ENCODE measurements at regions of chr7 and their contacts with region 1.

Region 1: DNA sequence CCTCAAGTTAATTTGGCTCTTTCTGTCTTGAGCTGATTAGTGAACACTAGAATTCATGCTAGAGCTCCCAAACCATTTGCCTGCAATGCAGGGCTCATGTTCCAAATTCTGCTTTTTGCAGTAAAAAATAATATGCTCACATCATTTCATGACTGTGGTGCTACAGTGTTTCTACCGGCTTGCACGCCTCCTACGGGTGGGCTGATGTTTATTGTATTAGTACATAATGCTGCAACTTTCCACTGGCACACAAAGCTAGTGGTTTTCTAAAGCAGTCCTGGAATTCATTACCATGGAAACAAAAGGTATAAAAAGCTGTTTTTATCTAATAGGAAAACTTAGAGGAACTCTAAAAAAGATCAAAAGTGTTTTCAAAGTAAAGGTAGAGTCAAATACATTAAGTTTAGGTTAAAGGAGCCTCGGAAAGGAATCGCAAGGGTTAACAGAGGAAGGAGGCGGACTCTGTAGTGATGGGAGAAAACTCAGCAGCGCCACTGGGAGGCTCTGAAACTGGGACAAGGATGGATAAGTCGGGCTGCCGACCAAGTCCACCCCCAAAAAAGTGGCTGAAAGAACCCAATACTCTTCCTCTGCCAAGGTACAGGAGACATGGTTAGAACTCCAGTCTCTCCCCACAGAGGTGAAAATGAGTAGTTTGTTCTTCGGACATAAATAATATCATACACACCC is 25.9 kb downstream of the GRM8 start:
- DNase-seq: no peak
- H3K4me3 ChIP-seq: no peak overlapping the region
- H3K27ac ChIP-seq: no peak overlapping the region
- H3K4me1 ChIP-seq: no peaks in the 10 kb centered on the region
- H3K27me3 ChIP-seq: peaks cover 6% of the 10 kb centered on the region
- CTCF ChIP-seq: no peak

Region 2: DNA sequence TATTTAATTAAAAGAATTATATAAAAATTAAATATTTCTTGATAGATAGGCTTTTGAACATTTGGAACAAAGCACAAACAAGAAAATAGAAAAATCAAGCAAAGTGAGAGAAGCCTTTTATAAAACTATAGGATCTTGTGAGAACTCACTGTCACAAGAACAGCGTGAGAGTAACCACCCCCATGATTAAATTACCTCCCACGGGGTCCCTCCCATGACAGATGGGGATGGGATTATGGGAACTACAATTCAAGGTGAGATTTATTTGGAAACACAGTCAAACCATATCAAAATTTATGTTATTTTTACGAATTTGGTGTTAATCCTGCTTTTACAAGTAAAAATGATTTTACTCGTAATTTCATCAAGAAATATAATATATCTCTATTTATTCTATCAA is 1161.1 kb before region 1 on chr7:
- CTCF ChIA-PET with region 1: no interaction called
- POLR2A ChIA-PET with region 1: no interaction called
- intact Hi-C with region 1: no loop called
- DNase-seq: no peak
- H3K4me3 ChIP-seq: no peak overlapping the region
- H3K27ac ChIP-seq: no peak overlapping the region
- H3K4me1 ChIP-seq: no peaks in the 10 kb centered on the region
- H3K27me3 ChIP-seq: no peaks in the 10 kb centered on the region
- CTCF ChIP-seq: no peak

Region 3: DNA sequence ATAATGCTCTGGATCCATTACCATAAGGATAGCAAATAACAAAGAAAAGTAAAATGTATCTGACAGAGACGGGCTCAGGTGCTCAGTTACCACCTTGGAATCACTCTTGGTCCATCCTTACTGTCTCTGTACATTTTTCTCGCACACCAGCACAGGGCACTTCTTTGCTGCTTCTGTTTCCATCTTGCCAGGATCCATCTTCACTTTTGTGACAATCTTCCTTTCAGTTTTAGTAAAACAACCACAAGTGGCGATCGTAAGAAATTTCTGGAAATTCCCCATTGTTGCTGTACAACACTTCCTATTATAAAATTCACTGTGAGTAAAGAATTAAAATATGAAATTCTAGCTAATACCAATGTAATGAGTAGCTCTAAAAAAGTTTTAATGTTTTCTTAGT is 669.6 kb before region 1 on chr7:
- CTCF ChIA-PET with region 1: no interaction called
- POLR2A ChIA-PET with region 1: interaction called, 10 read pairs
- intact Hi-C with region 1: no loop called
- DNase-seq: no peak
- H3K4me3 ChIP-seq: no peak overlapping the region
- H3K27ac ChIP-seq: no peak overlapping the region
- H3K4me1 ChIP-seq: no peaks in the 10 kb centered on the region
- H3K27me3 ChIP-seq: no peaks in the 10 kb centered on the region
- CTCF ChIP-seq: no peak

Measured in PC-9 (cell line).